GM10248 (cell line): ENCODE measurements at regions of chr2 and their contacts with region 1.

Region 1: DNA sequence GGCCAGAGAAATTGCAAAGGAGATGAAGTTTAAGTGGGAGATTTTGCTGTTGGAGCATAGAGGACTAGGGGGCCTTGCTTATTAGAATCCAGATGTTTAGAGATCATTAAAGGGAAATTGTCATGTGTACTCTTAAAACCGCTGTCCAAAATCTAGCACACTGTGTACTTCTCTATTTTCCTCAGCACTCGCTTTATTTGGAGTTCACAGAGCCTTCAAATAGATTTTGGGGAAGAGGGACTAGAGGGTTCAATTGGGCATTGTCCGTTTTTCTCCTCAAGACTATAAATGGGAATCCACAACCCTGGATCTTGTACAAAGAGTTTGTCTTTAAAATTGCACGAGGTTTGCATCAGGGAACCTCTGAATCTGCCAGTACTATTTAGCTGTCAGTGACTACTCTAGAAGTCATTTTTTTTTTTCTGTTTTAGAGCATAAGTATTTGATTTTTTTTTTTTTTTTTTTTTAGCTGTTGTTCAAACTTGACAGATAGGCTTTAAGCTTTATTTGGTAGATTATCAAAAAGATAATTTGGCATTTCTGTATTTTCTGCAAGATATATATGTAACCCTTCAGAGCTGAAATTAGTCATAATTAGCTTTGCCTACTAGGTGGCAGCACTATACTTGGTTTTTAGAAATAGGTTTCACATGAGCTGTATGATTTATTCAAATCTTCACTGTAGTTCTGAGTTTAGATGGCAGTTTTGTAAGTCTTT is 14.2 kb downstream of the PMS1 start:
- DNase-seq: peak; percentile 18
- CTCF ChIP-seq: peak; percentile 47

Region 2: GRCh38 chr2:189466660-189467059 is 331.8 kb before region 1 on chr2:
- CTCF ChIA-PET with region 1: no interaction called
- POLR2A ChIA-PET with region 1: no interaction called
- DNase-seq: no peak
- CTCF ChIP-seq: peak; percentile 9

Region 3: GRCh38 chr2:189783927-189784867 is 14.3 kb before region 1 on chr2 and contains the starts of genes ORMDL1 and PMS1:
- CTCF ChIA-PET with region 1: interaction called, 18 read pairs
- POLR2A ChIA-PET with region 1: no interaction called
- DNase-seq: peak; percentile 95
- CTCF ChIP-seq: no peak